ENCODE measurements at regions of chr5 and their contacts with region 1.

Region 1: DNA sequence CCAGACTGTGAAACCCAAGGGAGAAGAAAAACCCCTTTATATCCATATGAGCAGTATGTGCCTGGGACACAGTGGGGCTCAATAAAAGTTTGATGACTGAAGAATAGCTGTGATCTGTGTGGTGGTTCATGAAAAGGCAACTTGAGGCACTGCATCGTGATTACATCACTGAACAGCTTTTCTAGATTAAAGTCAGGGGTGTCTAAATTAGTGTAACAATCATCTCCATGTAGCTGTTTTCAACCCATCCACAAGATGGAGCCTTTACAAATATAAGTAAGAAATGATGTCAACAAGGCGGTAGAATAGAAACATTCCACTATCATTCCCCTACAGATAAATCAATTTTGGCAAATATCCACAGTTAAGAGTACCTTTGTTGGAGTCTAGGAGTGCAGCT is 55.5 kb downstream of the PRRC1 start:
- DNase-seq: no peak
- H3K4me3 ChIP-seq: no peak overlapping the region
- H3K27ac ChIP-seq: no peak overlapping the region
- H3K4me1 ChIP-seq: peaks cover 0 to 7% (median 0%) of the 10 kb centered on the region in 4 donors
- H3K27me3 ChIP-seq: no peaks in the 10 kb centered on the region
- CTCF ChIP-seq: no peak
- EP300 ChIP-seq: no peak
- POLR2A ChIP-seq: no peak

Region 2: GRCh38 chr5:127595484-127596368 is 22.8 kb after region 1 on chr5:
- in situ Hi-C with region 1: no loop called
- intact Hi-C with region 1: loop called (anchors 1 kb)
- DNase-seq: no peak
- H3K4me3 ChIP-seq: no peak overlapping the region
- H3K27ac ChIP-seq: no peak overlapping the region
- H3K4me1 ChIP-seq: no peaks in the 10 kb centered on the region
- H3K27me3 ChIP-seq: no peaks in the 10 kb centered on the region
- CTCF ChIP-seq: no peak
- EP300 ChIP-seq: no peak
- POLR2A ChIP-seq: no peak